H1 (cell line): ENCODE measurements at regions of chr21 and their contacts with region 1.

Region 1: GRCh38 chr21:42467140-42467983 is 28.7 kb downstream of the RSPH1 start:
- DNase-seq: no peak
- H3K4me3 ChIP-seq: no peak overlapping the region
- H3K27ac ChIP-seq: no peak overlapping the region
- H3K4me1 ChIP-seq: peaks cover 0 to 6% (median 5%) of the 10 kb centered on the region in 4 experiments; a peak in 6 of 7 replicates
- H3K27me3 ChIP-seq: no peaks in the 10 kb centered on the region; a peak in 1 of 7 replicates
- CTCF ChIP-seq: peak; percentile 18 to 58 (median 55)
- EP300 ChIP-seq: no peak
- POLR2A ChIP-seq: no peak
- RAD21 ChIP-seq: peak; percentile 53 to 66

Region 2: GRCh38 chr21:42392721-42393442 is 74.5 kb before region 1 on chr21:
- CTCF ChIA-PET with region 1: no interaction called
- POLR2A ChIA-PET with region 1: no interaction called
- DNase-seq: no peak
- H3K4me3 ChIP-seq: no peak overlapping the region
- H3K27ac ChIP-seq: no peak overlapping the region
- H3K4me1 ChIP-seq: peaks cover 0 to 12% (median 9%) of the 10 kb centered on the region in 4 experiments; a peak in 3 of 7 replicates
- H3K27me3 ChIP-seq: 0 out of 7 replicates have a peak, but pooled peaks cover 0 to 2% (median 0%) of the 10 kb centered on the region in 4 experiments
- CTCF ChIP-seq: no peak
- EP300 ChIP-seq: no peak
- POLR2A ChIP-seq: no peak
- RAD21 ChIP-seq: no peak

Region 3: GRCh38 chr21:42425591-42425990 is 41.8 kb before region 1 on chr21:
- CTCF ChIA-PET with region 1: no interaction called
- POLR2A ChIA-PET with region 1: no interaction called
- DNase-seq: no peak
- H3K4me3 ChIP-seq: no peak overlapping the region
- H3K27ac ChIP-seq: no peak overlapping the region
- H3K4me1 ChIP-seq: no peaks in the 10 kb centered on the region
- H3K27me3 ChIP-seq: no peaks in the 10 kb centered on the region; a peak in 1 of 7 replicates
- CTCF ChIP-seq: no peak
- EP300 ChIP-seq: no peak
- POLR2A ChIP-seq: no peak
- RAD21 ChIP-seq: no peak

Region 4: DNA sequence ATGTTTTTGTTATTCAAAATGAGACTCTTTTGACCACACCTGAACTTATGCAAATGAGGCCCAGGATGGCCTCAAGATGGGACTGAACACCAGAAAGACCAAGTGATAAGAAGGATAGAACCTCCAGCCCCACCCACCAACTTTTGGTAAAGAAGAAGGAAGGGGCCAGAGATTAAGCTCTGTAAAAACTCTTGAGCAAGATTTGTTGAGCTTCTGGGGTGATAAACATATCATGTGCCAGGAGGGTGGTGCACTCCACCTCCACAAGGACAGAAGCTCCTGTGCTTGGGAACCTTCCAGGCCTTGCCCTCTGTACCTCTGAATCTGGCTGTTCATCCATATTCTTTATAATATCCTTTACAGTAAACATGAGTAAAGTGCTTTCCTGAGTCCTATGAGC is 23.4 kb after region 1 on chr21:
- CTCF ChIA-PET with region 1: interaction called, 10 read pairs
- POLR2A ChIA-PET with region 1: no interaction called
- DNase-seq: no peak
- H3K4me3 ChIP-seq: no peak overlapping the region
- H3K27ac ChIP-seq: no peak overlapping the region
- H3K4me1 ChIP-seq: peaks cover 0 to 3% (median 0%) of the 10 kb centered on the region in 4 experiments; a peak in 2 of 7 replicates
- H3K27me3 ChIP-seq: peaks cover 0 to 5% (median 4%) of the 10 kb centered on the region in 4 experiments; a peak in 2 of 7 replicates
- CTCF ChIP-seq: no peak
- EP300 ChIP-seq: no peak
- POLR2A ChIP-seq: no peak
- RAD21 ChIP-seq: no peak

Region 5: GRCh38 chr21:42537106-42537742 is 69.9 kb after region 1 on chr21:
- CTCF ChIA-PET with region 1: interaction called, 19 read pairs
- POLR2A ChIA-PET with region 1: no interaction called
- DNase-seq: no peak
- H3K4me3 ChIP-seq: no peak overlapping the region
- H3K27ac ChIP-seq: no peak overlapping the region
- H3K4me1 ChIP-seq: peaks cover 0 to 3% (median 0%) of the 10 kb centered on the region in 4 experiments; a peak in 1 of 7 replicates
- H3K27me3 ChIP-seq: no peaks in the 10 kb centered on the region
- CTCF ChIP-seq: peak; percentile 4 to 54 (median 36)
- EP300 ChIP-seq: no peak
- POLR2A ChIP-seq: no peak
- RAD21 ChIP-seq: peak; percentile 58 to 71